MCF 10A (cell line): ENCODE measurements at regions of chr9 and their contacts with region 1.

Region 1: DNA sequence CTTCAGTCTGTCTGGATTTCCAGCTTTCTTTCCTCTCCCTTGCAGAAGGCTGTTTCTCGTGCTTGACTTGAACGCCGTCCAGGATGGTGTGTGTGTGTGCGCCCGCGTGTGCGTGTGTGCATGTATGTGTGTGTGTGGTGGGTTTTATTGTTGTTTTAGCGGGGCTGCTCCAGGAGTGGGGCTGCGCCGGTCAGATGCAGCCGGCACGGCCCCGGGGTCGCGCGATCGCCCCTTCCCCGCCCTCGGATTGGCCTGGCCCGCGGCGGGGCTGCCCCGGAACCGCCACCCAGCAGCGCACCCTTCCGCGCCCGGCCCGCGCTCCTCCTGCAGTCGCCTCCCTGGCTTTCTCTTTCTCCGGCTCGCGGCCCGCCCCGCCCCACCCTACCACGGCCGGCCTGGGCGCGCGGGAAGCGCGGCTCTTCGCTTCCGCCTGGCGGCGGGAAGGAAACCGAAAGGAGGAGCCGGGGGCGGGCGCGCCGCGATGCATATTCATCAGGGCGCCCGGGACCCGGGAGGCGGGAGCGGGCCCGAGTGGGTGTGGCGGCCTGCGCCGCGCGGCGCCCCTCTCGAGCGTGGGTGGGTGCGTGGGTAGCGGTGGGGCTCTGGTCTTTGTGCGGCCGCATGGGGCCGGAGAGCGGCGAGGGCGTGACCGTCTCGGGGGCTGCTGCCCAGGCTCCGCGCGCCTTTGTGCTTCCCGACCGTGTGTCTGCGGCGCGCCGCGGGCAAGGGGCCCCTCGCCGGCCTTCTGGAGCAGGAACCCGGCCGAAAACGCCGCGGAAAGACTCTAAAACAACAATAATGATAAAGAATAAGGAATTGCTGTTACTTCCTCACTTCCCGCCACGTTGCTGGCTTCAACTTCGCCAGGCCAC is 8.5 kb upstream of the NFIB start:
- DNase-seq: peak; percentile 94
- H3K4me3 Mint-ChIP-seq: peak overlapping the region; percentile 86
- H3K27ac Mint-ChIP-seq: peak overlapping the region; percentile 81
- H3K4me1 Mint-ChIP-seq: peaks cover 56% of the 10 kb centered on the region
- H3K27me3 Mint-ChIP-seq: no peaks in the 10 kb centered on the region
- CTCF ChIP-seq: peak; percentile 38

Region 2: GRCh38 chr9:13450723-13451122 is 871.7 kb before region 1 on chr9:
- CTCF ChIA-PET with region 1: no interaction called
- POLR2A ChIA-PET with region 1: no interaction called
- intact Hi-C with region 1: loop called (anchors 5 kb)
- DNase-seq: no peak
- H3K4me3 Mint-ChIP-seq: no peak overlapping the region
- H3K27ac Mint-ChIP-seq: no peak overlapping the region
- H3K4me1 Mint-ChIP-seq: peaks cover 6% of the 10 kb centered on the region
- H3K27me3 Mint-ChIP-seq: no peaks in the 10 kb centered on the region
- CTCF ChIP-seq: no peak

Region 3: DNA sequence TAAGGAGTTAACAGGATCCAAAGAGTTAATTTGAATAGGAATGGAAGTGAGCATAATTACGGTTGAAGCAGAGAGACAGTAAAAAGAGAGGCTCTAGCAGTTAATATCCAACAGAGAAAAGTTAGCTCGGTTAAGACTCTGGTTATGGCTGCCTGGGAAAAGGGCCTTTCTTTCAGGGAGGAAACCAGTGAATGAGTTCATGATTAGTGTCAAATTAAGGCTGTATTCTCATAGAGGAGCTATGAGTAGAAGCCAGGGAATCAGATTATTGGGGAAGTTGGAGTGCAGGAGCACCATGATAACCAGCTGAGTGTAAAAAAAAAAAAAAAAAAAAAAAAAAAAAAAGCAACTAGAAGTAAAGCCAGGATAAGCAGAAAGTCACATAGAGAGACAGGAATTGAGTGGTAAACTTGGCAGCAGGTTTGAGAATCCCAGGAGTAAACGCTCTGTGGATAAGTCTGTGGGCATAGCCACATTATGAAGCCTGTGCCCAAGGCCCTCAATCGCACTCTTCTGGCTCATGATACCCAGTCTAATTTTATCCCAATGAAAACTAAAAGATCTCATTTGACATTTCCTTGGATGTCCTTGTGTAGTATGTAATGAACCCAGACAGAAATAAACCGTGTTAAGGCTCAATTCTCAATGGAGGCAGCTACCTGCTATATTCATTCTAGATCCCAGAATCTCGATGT is 670.3 kb before region 1 on chr9:
- CTCF ChIA-PET with region 1: no interaction called
- POLR2A ChIA-PET with region 1: no interaction called
- intact Hi-C with region 1: no loop called
- DNase-seq: no peak
- H3K4me3 Mint-ChIP-seq: no peak overlapping the region
- H3K27ac Mint-ChIP-seq: no peak overlapping the region
- H3K4me1 Mint-ChIP-seq: no peaks in the 10 kb centered on the region
- H3K27me3 Mint-ChIP-seq: no peaks in the 10 kb centered on the region
- CTCF ChIP-seq: no peak

Region 4: DNA sequence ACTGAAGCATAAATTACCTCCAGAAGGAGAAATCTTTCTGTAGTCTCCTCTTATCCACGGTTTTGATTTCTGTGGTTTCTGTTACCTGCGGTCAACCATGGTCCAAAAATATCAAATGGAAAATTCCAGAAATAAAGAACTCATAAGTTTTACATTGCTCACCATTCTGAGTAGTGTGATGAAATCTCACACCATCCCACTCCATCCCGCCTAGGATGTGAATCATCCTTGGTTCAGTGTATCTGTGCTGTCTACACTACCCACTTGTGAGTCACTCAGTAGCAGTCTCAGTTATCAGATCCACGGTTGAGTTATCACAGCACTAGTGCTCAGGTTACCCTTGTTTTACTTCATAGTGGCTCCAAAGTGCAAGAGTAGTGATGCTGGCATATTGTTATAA is 379.8 kb before region 1 on chr9:
- CTCF ChIA-PET with region 1: no interaction called
- POLR2A ChIA-PET with region 1: no interaction called
- intact Hi-C with region 1: loop called (anchors 10 kb)
- DNase-seq: peak; percentile 96
- H3K4me3 Mint-ChIP-seq: no peak overlapping the region
- H3K27ac Mint-ChIP-seq: peak overlapping the region; percentile 80
- H3K4me1 Mint-ChIP-seq: peaks cover 20% of the 10 kb centered on the region
- H3K27me3 Mint-ChIP-seq: no peaks in the 10 kb centered on the region
- CTCF ChIP-seq: no peak

Region 5: GRCh38 chr9:14180093-14180959 is 142.1 kb before region 1 on chr9:
- CTCF ChIA-PET with region 1: no interaction called
- POLR2A ChIA-PET with region 1: interaction called, 10 read pairs
- intact Hi-C with region 1: no loop called
- DNase-seq: no peak
- H3K4me3 Mint-ChIP-seq: peak overlapping the region; percentile 77
- H3K27ac Mint-ChIP-seq: peak overlapping the region; percentile 63
- H3K4me1 Mint-ChIP-seq: peaks cover 34% of the 10 kb centered on the region
- H3K27me3 Mint-ChIP-seq: no peaks in the 10 kb centered on the region
- CTCF ChIP-seq: no peak

Region 6: GRCh38 chr9:14400658-14400995 is 78.2 kb after region 1 on chr9:
- CTCF ChIA-PET with region 1: no interaction called
- POLR2A ChIA-PET with region 1: interaction called, 3 read pairs
- intact Hi-C with region 1: loop called (anchors 2 kb)
- DNase-seq: peak; percentile 76
- H3K4me3 Mint-ChIP-seq: no peak overlapping the region
- H3K27ac Mint-ChIP-seq: no peak overlapping the region
- H3K4me1 Mint-ChIP-seq: peaks cover 11% of the 10 kb centered on the region
- H3K27me3 Mint-ChIP-seq: no peaks in the 10 kb centered on the region
- CTCF ChIP-seq: peak; percentile 48

Region 7: GRCh38 chr9:14412775-14413174 is 90.3 kb after region 1 on chr9:
- CTCF ChIA-PET with region 1: no interaction called
- POLR2A ChIA-PET with region 1: no interaction called
- intact Hi-C with region 1: no loop called
- DNase-seq: no peak
- H3K4me3 Mint-ChIP-seq: no peak overlapping the region
- H3K27ac Mint-ChIP-seq: no peak overlapping the region
- H3K4me1 Mint-ChIP-seq: no peaks in the 10 kb centered on the region
- H3K27me3 Mint-ChIP-seq: no peaks in the 10 kb centered on the region
- CTCF ChIP-seq: no peak

Region 8: GRCh38 chr9:14593406-14593805 is 271.0 kb after region 1 on chr9:
- CTCF ChIA-PET with region 1: no interaction called
- POLR2A ChIA-PET with region 1: no interaction called
- intact Hi-C with region 1: no loop called
- DNase-seq: no peak
- H3K4me3 Mint-ChIP-seq: no peak overlapping the region
- H3K27ac Mint-ChIP-seq: no peak overlapping the region
- H3K4me1 Mint-ChIP-seq: no peaks in the 10 kb centered on the region
- H3K27me3 Mint-ChIP-seq: no peaks in the 10 kb centered on the region
- CTCF ChIP-seq: no peak

Region 9: GRCh38 chr9:14857449-14858305 is 535.2 kb after region 1 on chr9:
- CTCF ChIA-PET with region 1: no interaction called
- POLR2A ChIA-PET with region 1: no interaction called
- intact Hi-C with region 1: no loop called
- DNase-seq: no peak
- H3K4me3 Mint-ChIP-seq: no peak overlapping the region
- H3K27ac Mint-ChIP-seq: no peak overlapping the region
- H3K4me1 Mint-ChIP-seq: no peaks in the 10 kb centered on the region
- H3K27me3 Mint-ChIP-seq: peaks cover 44% of the 10 kb centered on the region
- CTCF ChIP-seq: no peak